Activated CD4-positive, alpha-beta memory T cell treated with anti-CD3 and anti-CD28 coated beads, Interleukin-2, amount 10 ng/mL, durations not matched to agents 7 days and 5 days (primary cell): ENCODE measurements at regions of chr6 and their contacts with region 1.

Region 1: GRCh38 chr6:46090115-46091079 is 39.4 kb upstream of the ENPP4 start:
- DNase-seq: peak; percentile 60
- H3K4me3 Mint-ChIP-seq: no peak overlapping the region
- H3K27ac Mint-ChIP-seq: no peak overlapping the region
- H3K4me1 Mint-ChIP-seq: no peaks in the 10 kb centered on the region
- H3K27me3 Mint-ChIP-seq: peaks cover 28% of the 10 kb centered on the region

Region 2: GRCh38 chr6:45930420-45931040 is 159.9 kb before region 1 on chr6:
- CTCF ChIA-PET with region 1: interaction called, 13 read pairs
- POLR2A ChIA-PET with region 1: no interaction called
- DNase-seq: peak; percentile 62
- H3K4me3 Mint-ChIP-seq: no peak overlapping the region
- H3K27ac Mint-ChIP-seq: no peak overlapping the region
- H3K4me1 Mint-ChIP-seq: peaks cover 14% of the 10 kb centered on the region
- H3K27me3 Mint-ChIP-seq: no peaks in the 10 kb centered on the region

Region 3: DNA sequence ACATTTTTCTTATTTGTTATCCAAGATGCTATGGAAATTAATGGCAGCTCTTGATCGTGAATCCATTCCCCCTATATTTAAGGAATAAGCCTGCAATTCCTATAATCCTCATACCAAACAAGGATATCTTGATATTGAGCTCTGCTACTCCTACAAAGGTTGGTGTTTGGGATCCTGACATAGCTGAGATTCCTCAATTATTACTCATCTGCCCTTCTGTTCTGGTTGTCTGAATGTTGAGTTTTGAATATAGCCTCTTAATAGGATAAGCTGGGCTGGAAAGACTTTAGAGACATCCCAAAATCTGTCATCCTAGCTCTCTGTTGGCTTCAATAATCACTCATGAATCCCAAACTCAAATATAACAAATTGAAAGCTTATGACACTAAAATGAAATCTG is 124.6 kb before region 1 on chr6:
- CTCF ChIA-PET with region 1: no interaction called
- POLR2A ChIA-PET with region 1: no interaction called
- DNase-seq: no peak
- H3K4me3 Mint-ChIP-seq: no peak overlapping the region
- H3K27ac Mint-ChIP-seq: no peak overlapping the region
- H3K4me1 Mint-ChIP-seq: peaks cover 1% of the 10 kb centered on the region
- H3K27me3 Mint-ChIP-seq: no peaks in the 10 kb centered on the region

Region 4: DNA sequence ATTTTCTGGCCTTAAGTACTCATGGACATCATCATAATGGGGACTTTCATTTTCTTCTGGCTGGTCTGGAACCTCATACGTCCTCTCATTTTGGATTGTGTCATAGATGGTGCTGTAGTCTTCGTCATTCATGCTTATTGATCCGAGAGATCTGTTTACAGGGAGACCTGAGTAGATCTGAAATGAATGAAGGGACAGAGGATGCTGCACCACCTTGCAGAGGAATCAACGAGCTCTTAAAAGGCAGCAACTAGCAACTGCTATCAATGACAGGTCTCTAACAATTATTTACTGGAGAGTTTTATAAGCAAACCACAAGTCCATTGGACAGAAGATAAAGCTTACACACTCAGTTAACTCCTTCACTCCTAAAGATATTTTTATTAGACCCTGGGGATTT is 10.3 kb before region 1 on chr6:
- CTCF ChIA-PET with region 1: interaction called, 10 read pairs
- POLR2A ChIA-PET with region 1: no interaction called
- DNase-seq: no peak
- H3K4me3 Mint-ChIP-seq: no peak overlapping the region
- H3K27ac Mint-ChIP-seq: no peak overlapping the region
- H3K4me1 Mint-ChIP-seq: peaks cover 2% of the 10 kb centered on the region
- H3K27me3 Mint-ChIP-seq: no peaks in the 10 kb centered on the region

Region 5: DNA sequence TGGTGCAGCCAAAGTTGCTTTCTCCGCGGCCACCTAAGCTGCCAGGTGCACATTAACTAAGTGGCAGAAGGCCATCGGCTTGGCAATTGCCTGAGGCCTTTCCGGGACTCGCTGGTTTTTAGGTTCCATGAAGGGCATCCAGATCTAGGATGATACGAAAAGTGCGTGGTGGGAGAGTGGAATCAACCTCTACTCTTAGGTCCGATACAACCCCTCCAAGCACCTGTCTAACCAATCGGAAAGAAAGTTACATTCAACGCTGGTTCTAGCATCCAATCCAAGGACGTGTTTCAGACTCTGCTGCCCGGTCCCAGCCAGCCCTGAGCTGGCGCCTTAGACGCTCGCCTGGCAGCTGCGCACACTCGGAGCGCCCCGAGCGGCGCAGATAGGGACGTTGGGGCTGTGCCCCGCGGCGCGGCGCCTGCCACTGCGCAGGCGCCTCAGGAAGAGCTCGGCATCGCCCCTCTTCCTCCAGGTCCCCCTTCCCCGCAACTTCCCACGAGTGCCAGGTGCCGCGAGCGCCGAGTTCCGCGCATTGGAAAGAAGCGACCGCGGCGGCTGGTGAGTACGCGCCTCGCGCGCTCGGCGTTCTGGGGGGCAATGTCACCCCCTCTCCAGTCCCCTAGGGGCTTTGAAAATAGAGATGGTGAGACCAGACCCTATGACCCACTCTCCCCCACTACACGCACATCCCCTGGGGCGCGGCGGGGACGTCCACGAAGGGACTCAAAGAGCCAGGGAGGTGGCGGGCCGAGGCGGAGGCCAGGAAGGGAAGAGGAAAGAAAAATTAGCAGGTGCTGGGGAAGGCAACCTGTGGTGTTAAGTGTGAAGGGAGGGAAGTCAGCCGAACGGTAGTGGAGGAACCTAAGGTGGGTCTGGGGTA is 39.5 kb after region 1 on chr6 and contains the start of gene ENPP4:
- CTCF ChIA-PET with region 1: interaction called, 21 read pairs
- POLR2A ChIA-PET with region 1: interaction called, 6 read pairs
- DNase-seq: peak; percentile 91
- H3K4me3 Mint-ChIP-seq: peak within 1 kb of the TSS; percentile 88
- H3K27ac Mint-ChIP-seq: peak within 1 kb of the TSS; percentile 70
- H3K4me1 Mint-ChIP-seq: peaks cover 31% of the 10 kb centered on the region
- H3K27me3 Mint-ChIP-seq: no peaks in the 10 kb centered on the region
- total RNA-seq, gene ENPP4: 8.2 to 9.4 TPM

Region 6: GRCh38 chr6:46221222-46221793 is 130.9 kb after region 1 on chr6:
- CTCF ChIA-PET with region 1: interaction called, 11 read pairs
- POLR2A ChIA-PET with region 1: no interaction called
- DNase-seq: no peak
- H3K4me3 Mint-ChIP-seq: no peak overlapping the region
- H3K27ac Mint-ChIP-seq: no peak overlapping the region
- H3K4me1 Mint-ChIP-seq: peaks cover 5% of the 10 kb centered on the region
- H3K27me3 Mint-ChIP-seq: peaks cover 15% of the 10 kb centered on the region

Region 7: DNA sequence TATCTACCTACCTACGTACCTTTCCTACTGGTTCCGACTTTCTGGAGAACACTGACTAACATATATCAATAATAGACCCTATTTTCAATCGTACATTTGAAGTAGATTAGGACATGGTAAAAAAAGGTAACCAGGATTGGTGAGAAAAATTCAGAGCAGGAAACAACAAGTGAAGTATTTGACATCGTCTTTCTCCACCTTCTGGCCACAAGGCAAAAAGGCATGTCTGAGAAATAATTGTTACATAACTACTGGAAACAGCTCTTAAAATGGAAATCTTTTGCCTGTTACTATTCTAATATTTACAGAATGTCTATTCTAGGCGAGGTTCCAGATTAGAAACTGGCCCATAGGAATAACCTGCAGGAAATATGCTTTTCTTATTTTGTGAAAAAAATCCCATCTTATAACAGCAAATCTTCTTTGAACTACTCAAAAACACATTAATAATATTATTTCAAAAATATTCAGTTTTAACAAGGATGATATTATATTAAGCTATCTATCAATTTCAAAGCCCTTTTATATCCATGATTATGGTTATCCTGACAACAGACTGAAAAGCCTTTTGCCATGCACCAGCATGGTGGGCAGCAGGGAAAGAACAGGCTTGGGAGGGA is 320.0 kb after region 1 on chr6:
- CTCF ChIA-PET with region 1: interaction called, 67 read pairs
- POLR2A ChIA-PET with region 1: interaction called, 3 read pairs
- DNase-seq: peak; percentile 26
- H3K4me3 Mint-ChIP-seq: no peak overlapping the region
- H3K27ac Mint-ChIP-seq: no peak overlapping the region
- H3K4me1 Mint-ChIP-seq: no peaks in the 10 kb centered on the region
- H3K27me3 Mint-ChIP-seq: peaks cover 5% of the 10 kb centered on the region